ENCODE measurements at regions of chr2 and their contacts with region 1.

Region 1: DNA sequence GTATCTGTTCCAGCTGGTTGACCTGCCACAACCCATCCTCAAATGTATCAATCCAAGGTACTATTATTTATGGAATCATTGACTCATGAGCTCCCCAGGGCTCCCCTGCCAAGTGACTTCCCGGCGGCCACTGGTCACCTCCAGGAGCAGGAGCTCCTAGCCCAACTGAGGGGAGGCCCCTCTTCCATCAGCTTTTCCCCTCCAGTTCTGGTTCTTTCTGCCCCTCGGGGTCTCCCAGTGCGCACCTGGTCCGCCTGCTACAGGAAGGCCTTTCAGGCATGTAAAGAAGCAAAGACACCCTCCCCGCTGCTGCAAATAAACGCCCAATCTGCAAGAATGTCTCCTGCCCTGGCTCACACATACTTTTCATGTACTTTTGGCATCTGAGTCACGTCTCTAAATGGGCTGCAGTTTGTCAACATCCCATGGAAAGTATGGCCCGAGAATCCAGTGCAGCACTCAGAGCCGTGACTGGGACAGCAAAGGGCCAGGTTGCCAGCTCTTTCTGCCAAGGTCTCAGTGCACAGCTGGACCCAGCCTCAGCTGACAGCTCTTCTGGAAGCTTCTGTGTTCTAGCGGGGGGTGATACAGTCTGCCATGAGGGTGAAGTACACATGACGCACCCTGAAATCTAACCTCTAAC is 41.4 kb downstream of the KLHL29 start:
- DNase-seq: no peak
- H3K4me3 ChIP-seq: peak overlapping the region in 1 of 4 donors; percentile 12
- H3K27ac ChIP-seq: peak overlapping the region; percentile 69 to 85 (median 82)
- H3K4me1 ChIP-seq: peaks cover 18 to 68% (median 55%) of the 10 kb centered on the region in 4 donors
- H3K27me3 ChIP-seq: no peaks in the 10 kb centered on the region
- CTCF ChIP-seq: no peak
- EP300 ChIP-seq: no peak
- POLR2A ChIP-seq: no peak

Region 2: DNA sequence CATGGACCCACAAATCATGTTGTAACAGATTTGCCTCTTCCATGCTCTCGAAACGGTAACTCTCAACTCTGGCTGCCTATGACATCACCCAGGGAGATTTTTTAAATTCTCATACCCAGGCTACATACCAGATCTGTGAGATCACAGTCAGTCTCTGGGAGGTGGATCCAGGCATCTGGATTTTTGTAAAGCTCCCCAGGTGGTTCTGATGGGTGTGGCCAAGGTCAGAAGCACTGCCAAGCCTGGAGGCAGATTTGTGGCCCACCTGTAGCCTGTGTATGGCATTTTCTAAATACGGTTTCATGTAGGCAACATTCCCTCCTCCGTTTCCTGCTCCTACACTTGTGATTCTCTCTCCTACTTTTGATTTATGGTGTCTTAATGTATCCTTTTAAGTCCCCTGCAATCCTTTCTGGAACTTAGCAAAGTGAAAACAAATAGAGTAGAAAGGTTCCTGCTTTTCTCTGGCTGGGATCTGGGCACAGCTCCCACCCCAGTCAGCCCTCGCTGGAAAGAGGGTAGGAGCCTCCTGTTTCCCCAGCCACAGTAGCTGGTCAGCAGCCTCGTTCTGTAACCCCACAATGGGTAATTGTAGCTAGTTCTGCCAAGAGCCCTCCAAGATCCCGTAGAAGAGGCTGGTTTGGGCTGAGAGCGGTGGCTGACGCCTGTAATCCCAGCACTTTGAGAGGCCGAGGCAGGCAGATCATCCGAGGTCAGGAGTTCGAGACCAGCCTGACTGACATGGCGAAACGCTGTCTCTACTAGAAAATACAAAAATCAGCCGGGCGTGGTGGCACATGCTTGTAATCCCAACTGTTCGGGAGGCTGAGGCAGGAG is 54.8 kb after region 1 on chr2:
- intact Hi-C with region 1: loop called (anchors 10 kb)
- DNase-seq: no peak
- H3K4me3 ChIP-seq: peak overlapping the region in 1 of 4 donors; percentile 2
- H3K27ac ChIP-seq: peak overlapping the region; percentile 81 to 86 (median 81)
- H3K4me1 ChIP-seq: peaks cover 0 to 35% (median 29%) of the 10 kb centered on the region in 4 donors
- H3K27me3 ChIP-seq: no peaks in the 10 kb centered on the region
- CTCF ChIP-seq: no peak
- EP300 ChIP-seq: no peak
- POLR2A ChIP-seq: no peak

Region 3: DNA sequence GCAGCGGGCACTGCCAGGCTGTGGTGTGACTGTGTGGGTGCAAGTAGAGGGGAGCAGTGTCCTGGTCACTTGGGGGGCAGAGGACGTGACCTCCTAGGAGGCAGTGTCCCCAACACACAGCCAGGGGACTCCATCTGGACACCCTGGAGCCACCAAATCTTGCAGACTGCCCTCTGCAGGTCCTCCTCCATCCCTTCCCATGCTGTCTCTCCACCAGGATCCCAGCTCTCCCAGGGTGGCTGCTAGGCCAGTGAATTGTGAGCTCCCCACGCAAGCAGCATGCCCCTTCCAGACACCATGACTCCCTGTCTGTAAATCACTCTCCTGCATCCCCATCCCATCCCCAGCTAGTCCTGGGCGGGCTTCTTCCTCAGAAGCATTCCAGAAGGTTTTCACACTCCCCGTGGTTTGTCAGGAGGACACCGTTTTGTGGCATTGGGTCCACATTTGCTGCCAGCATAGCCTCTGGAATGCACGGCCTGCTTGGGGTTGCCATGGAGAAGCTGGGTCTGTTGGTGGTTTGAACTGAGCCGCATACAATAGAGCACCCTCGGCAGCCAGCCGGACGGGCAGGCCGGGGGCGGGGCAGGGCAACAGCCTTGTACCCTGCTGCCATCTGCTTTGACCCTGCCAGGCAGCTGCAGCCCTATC is 169.3 kb after region 1 on chr2:
- intact Hi-C with region 1: loop called (anchors 5 kb)
- DNase-seq: no peak
- H3K4me3 ChIP-seq: peak overlapping the region in 1 of 4 donors; percentile 25
- H3K27ac ChIP-seq: peak overlapping the region; percentile 87 to 99 (median 91)
- H3K4me1 ChIP-seq: peaks cover 36 to 97% (median 95%) of the 10 kb centered on the region in 4 donors
- H3K27me3 ChIP-seq: no peaks in the 10 kb centered on the region
- CTCF ChIP-seq: peak in 1 of 3 experiments; percentile 14
- EP300 ChIP-seq: peak; percentile 56
- POLR2A ChIP-seq: no peak

Measured in esophagus muscularis mucosa (tissue), 4 donors.